ENCODE measurements at regions of chr2 and their contacts with region 1.

Region 1: GRCh38 chr2:61470965-61471904 is at the start of gene USP34:
- DNase-seq: peak; percentile 98
- ATAC-seq: peak; percentile 98
- total RNA-seq, gene USP34: 45.7 TPM

Region 2: GRCh38 chr2:61356261-61356957 is 114.8 kb before region 1 on chr2:
- intact Hi-C with region 1: loop called (anchors 5 kb)
- DNase-seq: no peak
- ATAC-seq: no peak

Region 3: DNA sequence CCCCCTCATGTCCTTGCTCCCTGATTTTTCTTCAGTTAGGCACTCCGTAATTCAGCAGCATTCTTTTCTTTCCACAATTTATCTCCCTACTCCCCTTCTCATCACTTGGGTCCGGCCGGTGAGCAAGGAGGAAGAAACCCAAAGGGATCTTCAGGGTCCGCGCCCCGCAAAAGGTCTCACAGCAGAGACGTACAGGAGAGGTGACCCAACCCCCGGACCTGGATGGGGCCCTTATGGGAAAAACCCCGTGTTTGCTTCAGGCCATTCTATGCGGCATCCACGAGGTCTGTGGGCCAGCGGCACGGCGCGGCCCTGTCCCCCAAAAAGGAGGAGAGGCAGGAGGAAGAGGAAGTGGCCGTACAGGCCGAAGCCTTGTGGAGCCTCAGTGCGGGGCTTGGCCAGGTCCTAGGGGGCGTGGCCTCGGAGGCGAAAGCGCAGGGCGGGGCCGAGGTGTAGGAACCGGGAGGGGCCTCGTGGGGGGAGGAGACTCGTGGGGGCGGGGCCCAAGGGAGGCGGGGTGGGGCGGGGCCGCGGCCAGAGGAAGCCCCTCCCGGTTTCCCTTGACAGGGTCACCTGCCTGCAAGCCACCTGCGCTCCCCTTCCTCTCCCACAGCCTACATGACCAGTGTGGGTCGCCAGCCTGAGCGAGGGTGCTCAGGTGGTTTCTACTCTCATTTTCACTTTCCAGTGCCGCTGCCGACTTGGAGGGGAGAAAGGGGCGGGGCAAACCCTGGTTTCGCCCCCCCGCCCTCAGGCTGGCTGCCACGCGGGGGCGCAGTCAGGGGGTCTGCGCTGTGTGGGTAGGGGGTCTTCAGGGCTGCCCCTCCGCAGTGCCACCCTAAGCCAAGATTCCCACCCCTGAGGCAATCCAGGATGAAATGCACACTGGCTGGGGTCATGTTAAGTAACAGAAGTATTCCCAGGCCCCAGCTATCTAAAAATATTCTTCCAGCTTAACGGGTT is 223.4 kb after region 1 on chr2:
- intact Hi-C with region 1: loop called (anchors 5 kb)
- DNase-seq: peak; percentile 98
- ATAC-seq: peak; percentile 100

Measured in Right ventricle myocardium inferior (tissue), 1 donor.